MCF 10A (cell line): ENCODE measurements at regions of chr14 and their contacts with region 1.

Region 1: DNA sequence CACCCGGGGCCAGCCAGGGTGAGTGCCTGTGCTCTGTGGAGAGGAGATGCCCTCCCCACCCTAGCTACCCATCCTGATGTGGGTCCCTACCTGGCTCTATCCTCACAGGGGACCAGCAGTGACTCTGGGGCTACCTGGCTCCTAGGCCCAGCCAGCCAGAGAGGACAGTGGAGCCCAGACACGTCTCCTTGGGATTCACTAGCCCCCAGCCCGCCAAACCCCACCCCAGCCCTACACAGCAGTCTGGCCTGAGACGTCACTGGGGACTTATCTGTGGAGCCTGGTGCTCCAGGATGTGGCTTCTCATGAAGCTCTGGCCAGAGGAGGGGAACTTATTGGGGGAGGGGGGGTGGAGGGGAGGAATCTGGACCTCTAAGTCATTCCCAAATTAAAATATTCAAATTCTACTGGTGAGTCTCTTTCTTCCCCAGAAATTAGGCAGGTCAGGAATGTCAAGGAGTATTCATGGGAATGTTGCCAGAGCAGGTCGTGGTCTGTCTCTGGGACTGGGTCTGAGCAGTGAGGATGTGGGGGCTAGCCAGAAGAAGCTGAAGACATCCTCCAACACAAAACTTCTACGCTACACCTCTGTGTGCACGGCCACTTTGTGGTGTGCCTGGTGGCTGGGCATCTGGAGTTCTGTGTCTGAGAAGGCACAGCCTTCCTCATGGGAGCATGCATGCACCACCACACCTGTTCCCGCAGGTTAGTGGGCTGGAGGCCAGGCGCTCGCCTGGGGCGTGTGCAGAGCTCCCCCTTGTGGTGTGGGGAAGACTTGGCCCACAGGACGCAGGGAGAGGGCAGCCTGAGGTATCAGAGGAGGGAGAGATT is 2.7 kb downstream of the CMTM5 start:
- DNase-seq: peak; percentile 64
- H3K4me3 Mint-ChIP-seq: no peak overlapping the region
- H3K27ac Mint-ChIP-seq: no peak overlapping the region
- H3K4me1 Mint-ChIP-seq: no peaks in the 10 kb centered on the region
- H3K27me3 Mint-ChIP-seq: peaks cover 66% of the 10 kb centered on the region
- CTCF ChIP-seq: peak; percentile 93

Region 2: DNA sequence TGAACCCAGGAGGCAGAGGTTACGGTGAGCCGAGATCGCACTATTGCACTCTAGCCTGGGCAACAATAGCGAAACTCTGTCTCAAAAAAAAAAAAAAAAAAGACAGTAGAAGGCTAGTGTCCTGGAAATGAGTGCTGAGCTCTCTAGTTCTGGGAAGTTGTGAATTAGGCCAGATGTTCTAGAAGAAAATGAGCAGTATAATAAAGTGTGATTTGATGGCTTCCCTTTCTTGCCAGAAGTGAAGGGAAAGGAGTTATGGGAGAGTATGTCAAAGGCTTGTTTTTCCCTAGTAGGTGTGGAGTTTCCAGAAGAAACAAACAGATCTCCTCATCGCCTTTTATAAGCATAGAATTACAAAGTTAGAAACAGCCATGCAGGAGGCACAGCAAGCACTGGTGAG is 121.3 kb before region 1 on chr14:
- CTCF ChIA-PET with region 1: interaction called, 19 read pairs
- POLR2A ChIA-PET with region 1: no interaction called
- intact Hi-C with region 1: no loop called
- DNase-seq: no peak
- H3K4me3 Mint-ChIP-seq: no peak overlapping the region
- H3K27ac Mint-ChIP-seq: no peak overlapping the region
- H3K4me1 Mint-ChIP-seq: no peaks in the 10 kb centered on the region
- H3K27me3 Mint-ChIP-seq: peaks cover 9% of the 10 kb centered on the region
- CTCF ChIP-seq: no peak

Region 3: DNA sequence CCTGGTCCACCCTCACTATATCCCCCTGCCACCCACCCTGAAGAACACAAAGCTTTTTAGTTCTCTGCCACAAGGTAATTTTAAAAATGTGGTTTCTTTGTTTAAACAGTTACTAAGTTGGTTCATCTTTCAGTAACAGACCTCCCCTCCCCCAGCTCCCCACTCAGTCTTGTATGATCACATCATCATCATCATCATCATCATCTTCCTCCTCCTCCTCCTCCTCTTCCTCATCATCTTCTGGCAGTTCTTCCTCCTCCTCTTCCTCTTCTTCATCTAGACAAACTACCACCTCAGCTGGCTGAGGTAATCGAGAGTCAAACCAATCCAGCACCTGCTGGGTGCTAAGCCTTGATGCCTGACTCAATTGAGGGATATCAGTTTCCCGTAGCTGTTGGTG is 104.2 kb before region 1 on chr14:
- CTCF ChIA-PET with region 1: interaction called, 15 read pairs
- POLR2A ChIA-PET with region 1: no interaction called
- intact Hi-C with region 1: no loop called
- DNase-seq: no peak
- H3K4me3 Mint-ChIP-seq: no peak overlapping the region
- H3K27ac Mint-ChIP-seq: no peak overlapping the region
- H3K4me1 Mint-ChIP-seq: no peaks in the 10 kb centered on the region
- H3K27me3 Mint-ChIP-seq: no peaks in the 10 kb centered on the region
- CTCF ChIP-seq: no peak

Region 4: GRCh38 chr14:23327947-23328744 is 51.4 kb before region 1 on chr14:
- CTCF ChIA-PET with region 1: interaction called, 62 read pairs
- POLR2A ChIA-PET with region 1: interaction called, 4 read pairs
- intact Hi-C with region 1: loop called (anchors 1 kb)
- DNase-seq: peak; percentile 78
- H3K4me3 Mint-ChIP-seq: no peak overlapping the region
- H3K27ac Mint-ChIP-seq: no peak overlapping the region
- H3K4me1 Mint-ChIP-seq: peaks cover 11% of the 10 kb centered on the region
- H3K27me3 Mint-ChIP-seq: no peaks in the 10 kb centered on the region
- CTCF ChIP-seq: peak; percentile 80